ENCODE measurements at regions of chr12 and their contacts with region 1.

Region 1: DNA sequence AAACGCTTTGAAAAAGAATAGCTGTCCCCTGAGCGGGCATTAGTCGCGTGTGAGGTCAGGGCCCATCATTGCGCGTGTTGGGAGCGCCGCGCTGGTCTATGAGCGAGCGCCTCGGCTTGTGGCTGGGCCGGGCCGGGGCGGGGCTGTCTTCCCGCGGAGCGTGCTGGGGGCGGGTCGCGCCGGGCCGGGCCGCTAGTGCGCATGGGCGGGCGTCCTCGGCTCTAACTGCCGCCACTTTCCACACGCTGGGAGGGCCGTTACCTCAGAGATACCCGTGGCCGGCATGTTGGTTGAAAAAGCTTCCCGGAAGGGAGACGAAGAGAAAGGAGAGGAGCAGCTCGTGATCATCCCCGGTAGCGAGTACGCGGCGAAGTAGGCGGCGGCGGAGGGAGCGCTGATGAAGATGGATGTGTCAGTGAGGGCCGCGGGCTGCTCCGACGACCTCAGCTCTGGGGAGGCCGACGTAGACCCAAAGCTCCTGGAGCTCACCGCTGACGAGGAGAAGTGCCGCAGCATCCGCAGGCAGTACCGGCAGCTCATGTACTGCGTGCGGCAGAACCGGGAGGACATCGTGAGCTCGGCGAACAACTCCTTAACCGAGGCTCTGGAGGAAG is at the start of gene EID3:
- DNase-seq: peak; percentile 78 to 92 (median 91)
- ATAC-seq: peak; percentile 96
- H3K4me3 ChIP-seq: peak within 1 kb of the TSS; percentile 63 to 74
- H3K4me3 Mint-ChIP-seq: peak within 1 kb of the TSS; percentile 95
- H3K27ac ChIP-seq: peak within 1 kb of the TSS; percentile 60 to 80
- H3K27ac Mint-ChIP-seq: peak within 1 kb of the TSS; percentile 98
- H3K4me1 ChIP-seq: peaks cover 27% of the 10 kb centered on the region
- H3K4me1 Mint-ChIP-seq: peaks cover 62% of the 10 kb centered on the region
- H3K27me3 ChIP-seq: no peaks in the 10 kb centered on the region
- H3K27me3 Mint-ChIP-seq: no peaks in the 10 kb centered on the region
- CTCF ChIP-seq: no peak
- total RNA-seq, gene EID3: 11.7 to 13.0 TPM

Region 2: GRCh38 chr12:104064031-104064822 is 239.4 kb before region 1 on chr12 and contains the start of gene HCFC2:
- CTCF ChIA-PET with region 1: no interaction called
- POLR2A ChIA-PET with region 1: no interaction called
- intact Hi-C with region 1: loop called (anchors 5 to 10 kb)
- DNase-seq: peak; percentile 71 to 92 (median 87)
- ATAC-seq: peak; percentile 92
- H3K4me3 ChIP-seq: peak within 1 kb of the TSS; percentile 75 to 98
- H3K4me3 Mint-ChIP-seq: peak within 1 kb of the TSS; percentile 95
- H3K27ac ChIP-seq: peak within 1 kb of the TSS; percentile 61 to 64
- H3K27ac Mint-ChIP-seq: peak within 1 kb of the TSS; percentile 93
- H3K4me1 ChIP-seq: peaks cover 7% of the 10 kb centered on the region
- H3K4me1 Mint-ChIP-seq: peaks cover 29% of the 10 kb centered on the region
- H3K27me3 ChIP-seq: peaks cover 0 to 3% of the 10 kb centered on the region in 2 experiments
- H3K27me3 Mint-ChIP-seq: peaks cover 4% of the 10 kb centered on the region
- CTCF ChIP-seq: no peak
- total RNA-seq, gene HCFC2: 13.9 to 16.7 TPM

Region 3: DNA sequence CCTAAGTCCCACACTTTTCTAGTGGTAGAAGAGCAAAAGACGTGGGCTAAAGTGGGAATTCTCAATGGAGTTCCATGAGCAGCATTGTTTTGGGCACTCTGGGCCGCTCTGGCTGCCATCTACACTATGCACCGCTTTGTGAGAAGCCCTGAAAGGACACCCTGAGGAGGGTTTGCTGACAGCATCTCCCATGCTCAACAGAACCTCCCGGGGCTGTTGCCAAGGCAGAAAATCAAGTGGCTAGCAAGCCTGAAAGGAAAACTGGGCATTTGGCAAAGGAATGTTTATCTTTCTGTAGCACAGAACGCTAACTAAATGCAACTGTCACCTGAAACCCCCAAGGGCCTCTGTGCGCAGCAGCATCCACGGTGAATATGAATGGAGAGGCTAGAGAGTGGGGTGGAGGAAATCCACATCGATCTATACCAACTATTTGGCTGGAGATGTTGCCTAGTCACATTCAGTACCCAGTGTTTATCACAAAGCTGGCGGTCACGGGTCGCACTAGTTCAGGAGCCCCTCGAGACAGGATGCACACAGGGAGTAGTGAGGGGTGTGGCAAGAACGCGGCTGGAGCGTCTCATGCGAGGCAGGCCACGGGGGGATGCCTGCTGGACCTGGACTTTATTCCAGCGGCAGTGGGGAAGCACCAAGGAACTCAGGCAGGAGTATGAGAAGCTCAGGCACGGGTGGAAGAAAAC is 918.1 kb after region 1 on chr12:
- CTCF ChIA-PET with region 1: no interaction called
- POLR2A ChIA-PET with region 1: no interaction called
- intact Hi-C with region 1: no loop called
- DNase-seq: no peak
- ATAC-seq: no peak
- H3K4me3 ChIP-seq: no peak overlapping the region
- H3K4me3 Mint-ChIP-seq: no peak overlapping the region
- H3K27ac ChIP-seq: no peak overlapping the region
- H3K27ac Mint-ChIP-seq: no peak overlapping the region
- H3K4me1 ChIP-seq: peaks cover 6% of the 10 kb centered on the region
- H3K4me1 Mint-ChIP-seq: peaks cover 18% of the 10 kb centered on the region
- H3K27me3 ChIP-seq: no peaks in the 10 kb centered on the region
- H3K27me3 Mint-ChIP-seq: no peaks in the 10 kb centered on the region
- CTCF ChIP-seq: no peak

Region 4: DNA sequence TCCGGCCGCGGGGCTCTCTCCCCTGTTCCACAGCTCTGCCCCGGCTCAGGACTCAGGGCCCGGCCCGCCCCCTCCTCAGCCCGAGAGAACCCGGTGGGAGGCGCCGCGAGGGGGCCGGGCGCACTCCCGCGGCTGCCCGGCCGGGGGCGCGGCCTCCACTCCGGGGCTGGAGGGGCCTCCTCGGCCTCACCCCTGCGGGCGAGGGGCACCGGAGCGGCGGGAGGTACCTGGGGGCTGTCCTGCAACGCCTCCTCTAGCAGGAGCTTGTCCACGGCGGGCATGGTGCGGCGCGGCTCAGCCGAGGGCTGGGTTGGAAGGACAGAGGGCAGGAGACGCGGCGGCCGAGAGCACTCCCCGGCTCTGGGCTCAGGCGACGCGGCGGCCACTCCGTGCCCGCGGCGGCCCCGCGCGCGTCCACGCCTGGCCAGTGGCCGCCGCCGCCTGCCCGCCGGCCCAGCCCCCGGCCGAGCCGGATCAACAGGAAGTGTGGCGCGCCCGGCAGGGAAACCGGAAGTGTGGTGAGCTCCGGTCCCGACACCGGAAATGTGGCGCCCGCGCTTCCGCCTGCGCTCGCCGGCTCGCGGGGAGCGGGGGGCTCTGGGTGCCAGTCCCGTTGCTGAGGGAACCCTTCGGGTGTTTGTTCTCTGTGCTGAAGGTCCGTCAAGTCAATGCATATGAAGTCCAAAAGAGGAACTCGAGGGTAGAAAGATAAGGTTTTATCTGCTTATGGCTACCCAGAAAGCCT is 932.3 kb after region 1 on chr12 and contains the start of gene APPL2:
- CTCF ChIA-PET with region 1: no interaction called
- POLR2A ChIA-PET with region 1: no interaction called
- intact Hi-C with region 1: loop called in 1 of 2 experiments (anchors 10 kb)
- DNase-seq: peak; percentile 62 to 91 (median 82)
- ATAC-seq: peak; percentile 73
- H3K4me3 ChIP-seq: peak within 1 kb of the TSS; percentile 75 to 77
- H3K4me3 Mint-ChIP-seq: peak within 1 kb of the TSS; percentile 93
- H3K27ac ChIP-seq: peak within 1 kb of the TSS; percentile 79 to 87
- H3K27ac Mint-ChIP-seq: peak within 1 kb of the TSS; percentile 97
- H3K4me1 ChIP-seq: peaks cover 36% of the 10 kb centered on the region
- H3K4me1 Mint-ChIP-seq: peaks cover 51% of the 10 kb centered on the region
- H3K27me3 ChIP-seq: no peaks in the 10 kb centered on the region
- H3K27me3 Mint-ChIP-seq: no peaks in the 10 kb centered on the region
- CTCF ChIP-seq: no peak
- total RNA-seq, gene APPL2: 53.1 to 60.6 TPM

Measured in CD8-positive, alpha-beta T cell (primary cell).